ENCODE measurements at regions of chr2 and their contacts with region 1.

Region 1: GRCh38 chr2:130332271-130333073 is 10.2 kb upstream of the IMP4 start:
- DNase-seq: peak; percentile 63
- H3K4me3 ChIP-seq: no peak overlapping the region
- H3K27ac ChIP-seq: no peak overlapping the region
- H3K4me1 ChIP-seq: peaks cover 3% of the 10 kb centered on the region
- H3K27me3 ChIP-seq: peaks cover 6 to 25% of the 10 kb centered on the region in 2 experiments
- CTCF ChIP-seq: peak; percentile 92 to 94
- POLR2A ChIP-seq: no peak

Region 2: DNA sequence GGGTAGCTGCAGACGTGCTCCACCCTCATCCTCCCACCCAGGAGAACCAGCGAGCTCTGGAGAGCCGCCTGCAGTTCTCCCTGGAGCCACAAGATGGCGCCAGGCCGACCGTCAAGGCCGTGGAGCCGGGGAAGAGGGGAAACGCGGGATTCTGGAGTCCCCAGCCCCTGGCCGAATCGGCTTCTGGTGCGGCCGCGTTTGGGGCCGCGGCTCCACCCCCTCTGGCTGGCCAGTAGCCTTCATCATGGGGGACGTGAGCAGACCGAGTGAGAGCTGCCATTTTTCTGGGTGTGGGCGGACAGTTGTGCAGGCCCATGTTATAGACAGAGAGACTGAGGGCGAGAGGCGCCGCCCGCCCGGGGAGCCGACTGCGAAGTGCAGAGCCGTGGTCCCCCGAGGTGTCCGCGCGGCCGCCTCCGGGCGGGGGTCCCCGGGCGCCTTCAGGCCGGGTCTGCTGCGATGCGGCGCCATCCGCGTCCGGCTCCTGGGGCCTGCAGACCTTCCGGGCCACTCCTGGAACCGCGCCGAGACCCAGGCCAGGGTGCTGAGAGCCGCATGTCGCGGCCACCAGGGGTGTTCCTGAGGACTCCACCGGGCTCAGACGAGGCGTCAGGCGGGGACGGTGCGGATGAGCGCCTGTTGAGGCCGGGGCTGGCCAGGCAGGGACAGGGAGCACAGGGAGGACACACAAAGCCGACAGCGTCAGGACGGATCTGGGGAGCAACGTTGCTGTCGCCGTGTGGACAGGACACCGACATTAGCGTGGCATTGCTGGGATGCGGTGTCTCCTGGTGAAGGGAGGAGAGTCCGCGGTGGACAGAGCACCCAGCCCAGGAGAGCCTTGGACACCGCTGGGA is 1595.6 kb before region 1 on chr2:
- CTCF ChIA-PET with region 1: interaction called, 6 read pairs
- POLR2A ChIA-PET with region 1: no interaction called
- dilution Hi-C with region 1: no loop called
- intact Hi-C with region 1: loop called (anchors 10 kb)
- DNase-seq: peak; percentile 50
- H3K4me3 ChIP-seq: peak overlapping the region in 1 of 3 experiments; percentile 14
- H3K27ac ChIP-seq: no peak overlapping the region
- H3K4me1 ChIP-seq: peaks cover 3% of the 10 kb centered on the region
- H3K27me3 ChIP-seq: no peaks in the 10 kb centered on the region
- CTCF ChIP-seq: peak; percentile 94 to 99
- POLR2A ChIP-seq: no peak

Region 3: DNA sequence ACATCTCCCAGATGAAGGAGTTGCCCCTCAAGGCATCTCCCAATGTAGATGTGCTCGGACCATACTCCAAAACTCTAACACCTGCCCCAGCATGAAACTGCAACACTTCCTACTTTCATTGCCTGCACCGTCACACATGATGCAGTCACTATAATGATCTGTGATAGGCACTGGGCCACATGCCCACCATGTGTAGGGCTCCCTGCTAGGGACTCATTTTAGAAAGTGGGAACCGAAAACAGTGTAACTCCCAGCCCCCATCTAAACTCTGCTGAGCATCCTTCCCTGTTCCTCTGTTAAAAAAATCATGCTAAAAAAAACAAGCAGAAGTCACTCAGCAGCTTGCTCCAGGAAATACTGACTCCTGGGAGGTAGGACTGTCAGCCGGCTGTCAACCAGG is 849.1 kb before region 1 on chr2:
- CTCF ChIA-PET with region 1: no interaction called
- POLR2A ChIA-PET with region 1: no interaction called
- dilution Hi-C with region 1: no loop called
- intact Hi-C with region 1: no loop called
- DNase-seq: no peak
- H3K4me3 ChIP-seq: no peak overlapping the region
- H3K27ac ChIP-seq: no peak overlapping the region
- H3K4me1 ChIP-seq: no peaks in the 10 kb centered on the region
- H3K27me3 ChIP-seq: no peaks in the 10 kb centered on the region
- CTCF ChIP-seq: no peak
- POLR2A ChIP-seq: no peak

Region 4: GRCh38 chr2:129936334-129936934 is 396.0 kb before region 1 on chr2:
- CTCF ChIA-PET with region 1: interaction called, 147 read pairs
- POLR2A ChIA-PET with region 1: no interaction called
- dilution Hi-C with region 1: no loop called
- intact Hi-C with region 1: loop called (anchors 1 kb)
- DNase-seq: no peak
- H3K4me3 ChIP-seq: no peak overlapping the region
- H3K27ac ChIP-seq: no peak overlapping the region
- H3K4me1 ChIP-seq: no peaks in the 10 kb centered on the region
- H3K27me3 ChIP-seq: peaks cover 2 to 3% of the 10 kb centered on the region in 2 experiments
- CTCF ChIP-seq: no peak
- POLR2A ChIP-seq: no peak

Region 5: GRCh38 chr2:130154773-130155765 is 177.4 kb before region 1 on chr2:
- CTCF ChIA-PET with region 1: interaction called, 17 read pairs
- POLR2A ChIA-PET with region 1: no interaction called
- dilution Hi-C with region 1: no loop called
- intact Hi-C with region 1: loop called (anchors 1 kb)
- DNase-seq: no peak
- H3K4me3 ChIP-seq: no peak overlapping the region
- H3K27ac ChIP-seq: no peak overlapping the region
- H3K4me1 ChIP-seq: no peaks in the 10 kb centered on the region
- H3K27me3 ChIP-seq: no peaks in the 10 kb centered on the region
- CTCF ChIP-seq: no peak
- POLR2A ChIP-seq: no peak

Region 6: DNA sequence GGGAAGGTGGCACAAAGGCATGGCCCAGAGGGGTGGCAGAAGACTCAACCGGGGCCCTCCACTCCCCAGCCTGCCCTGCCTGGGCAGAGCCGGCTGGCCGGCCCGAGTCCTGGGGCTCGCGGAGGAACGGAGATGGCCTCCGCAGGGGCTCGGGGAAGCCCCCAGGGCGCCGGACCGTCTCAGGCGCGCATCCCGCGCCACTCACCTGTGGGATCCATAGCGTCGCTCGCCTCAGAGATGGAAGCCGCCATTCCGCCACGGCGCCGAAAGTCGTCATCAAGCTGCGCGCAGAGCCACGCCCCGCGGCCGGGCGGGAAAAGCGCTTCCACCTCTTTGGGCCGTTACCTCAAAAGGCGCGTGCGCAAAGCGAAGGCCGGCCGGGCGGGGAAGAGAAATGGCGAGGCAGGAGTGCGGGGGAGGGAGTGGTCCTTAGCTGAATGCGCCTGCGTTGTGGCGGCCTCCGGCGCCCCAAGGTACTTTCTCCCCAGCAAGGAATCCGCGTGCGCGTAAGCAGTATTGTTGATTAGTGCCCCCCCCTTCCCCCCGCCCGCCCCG is 151.1 kb before region 1 on chr2 and contains the start of gene SMPD4:
- CTCF ChIA-PET with region 1: interaction called, 14 read pairs
- POLR2A ChIA-PET with region 1: no interaction called
- dilution Hi-C with region 1: no loop called
- intact Hi-C with region 1: loop called (anchors 1 kb)
- DNase-seq: peak; percentile 96
- H3K4me3 ChIP-seq: peak within 1 kb of the TSS; percentile 76 to 96 (median 88)
- H3K27ac ChIP-seq: peak within 1 kb of the TSS; percentile 78
- H3K4me1 ChIP-seq: peaks cover 11% of the 10 kb centered on the region
- H3K27me3 ChIP-seq: no peaks in the 10 kb centered on the region
- CTCF ChIP-seq: no peak
- POLR2A ChIP-seq: peak; percentile 53
- total RNA-seq, gene SMPD4: 88.1 and 91.4 TPM in 2 replicates

Region 7: GRCh38 chr2:130241041-130241707 is 91.3 kb before region 1 on chr2:
- CTCF ChIA-PET with region 1: no interaction called
- POLR2A ChIA-PET with region 1: no interaction called
- dilution Hi-C with region 1: no loop called
- intact Hi-C with region 1: loop called (anchors 10 kb)
- DNase-seq: peak; percentile 61
- H3K4me3 ChIP-seq: no peak overlapping the region
- H3K27ac ChIP-seq: no peak overlapping the region
- H3K4me1 ChIP-seq: no peaks in the 10 kb centered on the region
- H3K27me3 ChIP-seq: no peaks in the 10 kb centered on the region
- CTCF ChIP-seq: no peak
- POLR2A ChIP-seq: no peak

Region 8: GRCh38 chr2:130342533-130343275 is 10.2 kb after region 1 on chr2 and contains the start of gene IMP4:
- CTCF ChIA-PET with region 1: interaction called, 13 read pairs
- POLR2A ChIA-PET with region 1: interaction called, 8 read pairs
- dilution Hi-C with region 1: no loop called
- intact Hi-C with region 1: no loop called
- DNase-seq: peak; percentile 99
- H3K4me3 ChIP-seq: peak within 1 kb of the TSS; percentile 52 to 92 (median 83)
- H3K27ac ChIP-seq: peak within 1 kb of the TSS; percentile 81
- H3K4me1 ChIP-seq: peaks cover 8% of the 10 kb centered on the region
- H3K27me3 ChIP-seq: no peaks in the 10 kb centered on the region
- CTCF ChIP-seq: peak; percentile 12 to 47
- POLR2A ChIP-seq: peak; percentile 61
- total RNA-seq, gene IMP4: 63.1 and 74.0 TPM in 2 replicates